IMR-90 (cell line): ENCODE measurements at regions of chr1 and their contacts with region 1.

Region 1: GRCh38 chr1:32127409-32128198 is 19.7 kb downstream of the KPNA6 start:
- DNase-seq: no peak
- ATAC-seq: no peak
- H3K4me3 ChIP-seq: no peak overlapping the region
- H3K27ac ChIP-seq: no peak overlapping the region
- H3K4me1 ChIP-seq: no peaks in the 10 kb centered on the region
- H3K27me3 ChIP-seq: no peaks in the 10 kb centered on the region
- CTCF ChIP-seq: no peak
- POLR2A ChIP-seq: no peak
- RAD21 ChIP-seq: no peak

Region 2: GRCh38 chr1:32142446-32143301 is 15.1 kb after region 1 on chr1:
- CTCF ChIA-PET with region 1: interaction called, 10 read pairs
- POLR2A ChIA-PET with region 1: no interaction called
- dilution Hi-C with region 1: no loop called
- in situ Hi-C with region 1: no loop called
- intact Hi-C with region 1: no loop called
- DNase-seq: peak; percentile 88
- ATAC-seq: peak; percentile 86
- H3K4me3 ChIP-seq: no peak overlapping the region
- H3K27ac ChIP-seq: no peak overlapping the region
- H3K4me1 ChIP-seq: peaks cover 11% of the 10 kb centered on the region
- H3K27me3 ChIP-seq: no peaks in the 10 kb centered on the region
- CTCF ChIP-seq: no peak
- POLR2A ChIP-seq: no peak
- RAD21 ChIP-seq: no peak

Region 3: DNA sequence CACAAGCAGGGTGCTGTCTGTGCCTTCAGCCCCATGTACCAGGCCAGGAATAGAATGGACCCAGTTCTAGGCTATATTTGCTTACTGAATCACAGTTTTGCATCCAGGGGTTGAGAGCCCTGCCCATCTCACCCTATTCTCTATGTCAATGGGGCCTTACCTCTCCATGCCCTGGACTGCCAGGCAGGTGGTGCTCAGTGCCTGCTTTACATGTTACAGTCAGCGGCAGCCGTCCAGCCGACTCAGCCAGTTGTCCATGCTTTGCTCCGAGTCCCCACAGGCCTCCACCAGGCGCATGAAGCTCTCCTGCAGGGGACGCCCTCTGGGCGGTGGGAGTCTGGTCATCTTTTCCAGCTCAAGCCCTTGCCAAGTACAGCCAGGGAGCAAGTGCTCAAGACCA is 107.2 kb after region 1 on chr1:
- CTCF ChIA-PET with region 1: no interaction called
- POLR2A ChIA-PET with region 1: no interaction called
- dilution Hi-C with region 1: no loop called
- in situ Hi-C with region 1: no loop called
- intact Hi-C with region 1: no loop called
- DNase-seq: no peak
- ATAC-seq: no peak
- H3K4me3 ChIP-seq: no peak overlapping the region
- H3K27ac ChIP-seq: peak overlapping the region; percentile 88
- H3K4me1 ChIP-seq: peaks cover 12% of the 10 kb centered on the region
- H3K27me3 ChIP-seq: no peaks in the 10 kb centered on the region
- CTCF ChIP-seq: no peak
- POLR2A ChIP-seq: no peak
- RAD21 ChIP-seq: no peak